ENCODE measurements at regions of chr22 and their contacts with region 1.

Region 1: GRCh38 chr22:38201710-38202436 is at the start of gene MAFF:
- DNase-seq: peak; percentile 97
- ATAC-seq: peak; percentile 72
- H3K4me3 Mint-ChIP-seq: peak within 1 kb of the TSS; percentile 82
- H3K27ac Mint-ChIP-seq: peak within 1 kb of the TSS; percentile 86
- H3K4me1 Mint-ChIP-seq: peaks cover 30% of the 10 kb centered on the region
- H3K27me3 Mint-ChIP-seq: no peaks in the 10 kb centered on the region
- total RNA-seq, gene MAFF: 8.3 to 9.4 TPM

Region 2: DNA sequence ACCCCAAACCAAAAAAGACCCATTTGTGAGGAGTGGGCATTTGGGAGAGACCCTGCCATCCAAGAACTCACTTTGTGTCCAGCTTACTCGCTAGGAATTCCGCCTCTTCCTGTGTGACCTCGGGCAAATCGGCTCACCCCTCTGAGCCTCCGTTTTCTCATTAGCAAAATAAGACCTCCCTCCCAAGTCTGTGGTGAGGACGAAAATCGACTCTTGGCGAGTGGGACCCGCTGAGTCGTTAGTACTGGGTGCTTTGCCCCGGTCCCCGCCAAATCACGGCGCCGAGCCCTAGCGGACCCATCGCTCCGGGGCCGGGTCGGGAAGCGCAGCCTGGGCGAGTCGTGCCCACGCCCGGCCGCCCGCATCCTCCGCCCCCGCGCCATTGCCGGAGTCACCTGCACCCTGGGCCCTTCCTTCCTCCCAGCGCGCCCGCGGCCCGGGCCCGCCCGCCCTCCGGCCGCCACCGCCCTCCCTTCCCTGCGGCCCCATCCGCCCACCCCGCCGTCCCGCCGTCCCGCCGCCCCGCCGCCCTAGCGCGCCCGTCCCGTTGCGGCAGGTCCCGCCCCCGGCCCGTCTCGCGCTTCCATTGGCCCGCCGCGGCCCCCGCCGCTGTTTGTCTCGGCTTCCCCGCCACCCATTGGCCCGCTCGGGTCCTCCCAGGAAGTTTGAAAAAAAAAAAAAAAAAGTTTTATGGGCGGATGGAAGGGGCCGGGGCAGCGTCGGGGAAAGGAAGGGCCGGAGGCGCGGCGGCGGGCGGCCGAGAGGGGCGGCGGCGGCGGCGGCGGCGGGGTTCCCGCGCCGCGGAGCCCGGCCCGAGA is 456.1 kb before region 1 on chr22:
- CTCF ChIA-PET with region 1: no interaction called
- POLR2A ChIA-PET with region 1: no interaction called
- intact Hi-C with region 1: loop called in 1 of 2 experiments (anchors 5 kb)
- DNase-seq: peak; percentile 95
- ATAC-seq: peak; percentile 91
- H3K4me3 Mint-ChIP-seq: peak overlapping the region; percentile 84
- H3K27ac Mint-ChIP-seq: peak overlapping the region; percentile 90
- H3K4me1 Mint-ChIP-seq: peaks cover 25% of the 10 kb centered on the region
- H3K27me3 Mint-ChIP-seq: no peaks in the 10 kb centered on the region

Region 3: DNA sequence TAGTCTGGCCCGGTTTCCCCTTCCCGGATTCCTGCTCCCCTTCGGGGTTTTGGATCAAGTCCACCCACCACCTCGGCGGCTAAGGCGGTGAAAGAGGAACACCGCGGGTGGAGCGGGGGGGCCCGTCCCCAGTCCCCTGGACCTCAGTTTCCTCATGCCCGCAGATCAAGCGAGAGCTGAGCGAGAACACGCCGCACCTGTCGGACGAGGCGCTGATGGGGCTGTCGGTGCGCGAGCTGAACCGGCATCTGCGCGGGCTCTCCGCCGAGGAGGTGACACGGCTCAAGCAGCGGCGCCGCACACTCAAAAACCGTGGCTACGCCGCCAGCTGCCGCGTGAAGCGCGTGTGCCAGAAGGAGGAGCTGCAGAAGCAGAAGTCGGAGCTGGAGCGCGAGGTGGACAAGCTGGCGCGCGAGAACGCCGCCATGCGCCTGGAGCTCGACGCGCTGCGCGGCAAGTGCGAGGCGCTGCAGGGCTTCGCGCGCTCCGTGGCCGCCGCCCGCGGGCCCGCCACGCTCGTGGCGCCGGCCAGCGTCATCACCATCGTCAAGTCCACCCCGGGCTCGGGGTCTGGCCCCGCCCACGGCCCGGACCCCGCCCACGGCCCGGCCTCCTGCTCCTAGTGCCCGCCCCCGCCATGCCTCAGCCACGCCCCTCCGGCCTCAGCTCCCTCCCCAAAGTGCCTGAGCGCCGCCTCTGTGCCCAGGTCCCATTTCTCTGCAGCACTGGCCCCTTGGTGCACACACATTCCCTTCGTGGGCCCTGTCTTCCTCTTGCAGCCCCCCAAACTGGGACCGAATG is 12.6 kb after region 1 on chr22:
- CTCF ChIA-PET with region 1: interaction called, 7 read pairs
- POLR2A ChIA-PET with region 1: interaction called, 3 read pairs
- intact Hi-C with region 1: loop called in 1 of 2 experiments (anchors 1 kb)
- DNase-seq: peak; percentile 81
- ATAC-seq: peak; percentile 57
- H3K4me3 Mint-ChIP-seq: no peak overlapping the region
- H3K27ac Mint-ChIP-seq: no peak overlapping the region
- H3K4me1 Mint-ChIP-seq: peaks cover 40% of the 10 kb centered on the region
- H3K27me3 Mint-ChIP-seq: no peaks in the 10 kb centered on the region

Region 4: GRCh38 chr22:38317122-38317994 is 115.5 kb after region 1 on chr22 and contains the start of gene CSNK1E:
- CTCF ChIA-PET with region 1: no interaction called
- POLR2A ChIA-PET with region 1: interaction called, 7 read pairs
- intact Hi-C with region 1: loop called in 1 of 2 experiments (anchors 1 kb)
- DNase-seq: peak; percentile 84
- ATAC-seq: peak; percentile 63
- H3K4me3 Mint-ChIP-seq: peak within 1 kb of the TSS; percentile 90
- H3K27ac Mint-ChIP-seq: peak within 1 kb of the TSS; percentile 94
- H3K4me1 Mint-ChIP-seq: peaks cover 41% of the 10 kb centered on the region
- H3K27me3 Mint-ChIP-seq: no peaks in the 10 kb centered on the region
- total RNA-seq, gene CSNK1E: 117 to 145 TPM

Region 5: DNA sequence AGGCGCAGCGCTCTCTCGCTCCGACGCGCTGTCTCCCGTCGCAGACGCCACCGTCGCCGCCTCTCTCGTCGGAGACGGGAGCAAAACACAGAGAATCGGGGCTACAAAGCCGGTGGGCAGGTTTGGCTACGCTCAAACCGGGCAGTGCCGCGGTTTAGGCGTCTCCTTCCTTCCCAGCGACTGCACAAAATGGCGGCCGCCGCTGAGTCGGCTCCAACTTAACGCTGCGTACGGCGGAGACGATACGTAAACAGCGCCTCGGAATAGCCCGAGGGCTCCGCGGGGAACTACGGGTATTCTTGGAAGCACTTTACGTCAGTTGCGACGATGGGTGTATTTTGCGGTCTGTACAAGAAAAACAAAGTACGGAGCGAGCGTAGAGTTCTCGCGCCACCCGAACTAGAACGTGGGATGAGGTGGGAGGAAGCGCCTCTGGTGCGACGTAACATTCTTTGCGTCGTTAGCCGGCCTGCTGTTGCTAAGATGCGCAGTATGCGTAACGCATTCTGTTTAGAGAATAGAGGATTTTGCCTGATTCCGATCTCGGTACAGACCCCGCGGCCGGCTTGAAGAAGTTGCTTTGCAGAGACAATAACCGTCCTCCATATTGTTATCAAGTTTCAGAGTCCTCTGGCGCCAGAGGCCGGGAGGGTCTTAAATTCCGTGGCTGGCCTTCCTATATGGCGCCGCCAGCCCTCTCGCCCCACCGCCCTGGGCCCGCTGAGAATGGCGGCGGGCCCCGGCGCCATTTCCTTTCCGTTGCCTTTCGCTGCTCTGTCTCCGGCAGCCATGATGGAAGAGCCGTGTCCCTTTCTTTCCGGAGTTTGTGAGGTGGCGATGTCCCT is 304.5 kb after region 1 on chr22 and contains the start of gene DDX17:
- CTCF ChIA-PET with region 1: no interaction called
- POLR2A ChIA-PET with region 1: no interaction called
- intact Hi-C with region 1: loop called in 1 of 2 experiments (anchors 2 kb)
- DNase-seq: peak; percentile 95
- ATAC-seq: peak; percentile 89
- H3K4me3 Mint-ChIP-seq: peak within 1 kb of the TSS; percentile 89
- H3K27ac Mint-ChIP-seq: peak within 1 kb of the TSS; percentile 100
- H3K4me1 Mint-ChIP-seq: peaks cover 36% of the 10 kb centered on the region
- H3K27me3 Mint-ChIP-seq: no peaks in the 10 kb centered on the region
- total RNA-seq, gene DDX17: 259 to 328 TPM

Region 6: DNA sequence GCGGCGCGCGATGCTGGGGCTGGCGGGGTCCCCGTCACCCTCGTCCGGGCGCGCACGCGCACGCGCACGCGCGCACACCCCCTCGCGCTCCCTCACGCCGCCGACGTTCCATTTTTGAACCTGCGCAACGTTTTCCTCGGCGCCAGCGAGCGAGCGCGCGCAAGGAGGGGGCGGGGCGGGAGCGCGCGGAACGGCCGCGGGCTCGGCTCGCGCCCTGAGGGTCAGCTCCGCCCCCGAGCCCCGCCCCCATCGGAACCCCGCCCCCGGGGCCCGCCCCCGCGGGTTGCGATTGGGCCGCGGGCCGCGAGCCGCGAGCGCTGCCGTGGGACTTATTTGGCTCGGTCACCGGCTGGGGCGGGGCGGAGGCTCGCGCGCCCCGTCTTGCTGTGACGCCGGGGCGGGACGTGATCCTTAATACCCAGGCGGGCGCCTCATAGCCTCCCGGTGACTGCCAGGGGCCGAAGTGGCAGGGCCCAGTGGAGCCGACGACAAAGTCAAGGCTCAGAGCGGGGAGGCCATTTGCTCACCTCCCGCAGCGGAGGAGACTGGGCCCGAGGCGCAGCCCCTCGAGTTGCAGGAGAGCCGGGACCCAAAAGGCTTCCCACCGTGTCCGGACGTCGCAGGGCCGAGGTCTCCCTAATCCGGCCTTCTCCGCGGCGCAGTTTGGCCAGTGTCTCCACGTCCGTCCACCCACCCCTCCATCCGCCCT is 950.8 kb after region 1 on chr22 and contains the start of gene CBX7:
- CTCF ChIA-PET with region 1: no interaction called
- POLR2A ChIA-PET with region 1: no interaction called
- intact Hi-C with region 1: loop called in 1 of 2 experiments (anchors 10 kb)
- DNase-seq: peak; percentile 95
- ATAC-seq: peak; percentile 83
- H3K4me3 Mint-ChIP-seq: peak within 1 kb of the TSS; percentile 76
- H3K27ac Mint-ChIP-seq: peak within 1 kb of the TSS; percentile 72
- H3K4me1 Mint-ChIP-seq: peaks cover 40% of the 10 kb centered on the region
- H3K27me3 Mint-ChIP-seq: peaks cover 13% of the 10 kb centered on the region
- total RNA-seq, gene CBX7: 19.9 to 20.3 TPM

Measured in activated CD4-positive, alpha-beta T cell treated with anti-CD3 and anti-CD28 coated beads for 36 hours (primary cell).